ENCODE measurements at regions of chr20 and their contacts with region 1.

Region 1: DNA sequence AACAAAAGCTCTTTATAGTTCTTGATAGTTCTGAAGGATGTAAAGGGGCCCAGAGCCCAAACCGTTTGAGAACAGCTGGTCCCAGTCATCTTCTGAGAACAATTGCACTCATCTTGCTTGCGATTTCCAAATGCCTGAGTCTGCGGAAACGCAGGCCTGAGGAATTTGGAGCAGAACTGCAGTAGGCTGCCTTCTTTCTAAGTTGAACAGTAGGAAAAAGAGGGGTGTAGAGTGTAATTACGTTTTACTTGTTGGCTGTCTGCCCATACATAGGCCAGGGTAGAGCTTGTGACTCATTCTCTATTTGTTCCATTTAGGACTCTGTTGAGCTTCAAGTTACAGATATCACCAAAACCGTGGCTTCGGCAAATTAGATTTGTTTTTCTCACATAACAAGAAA is 42.0 kb upstream of the KIF16B start:
- DNase-seq: no peak

Region 2: GRCh38 chr20:15265581-15266309 is 1349.5 kb before region 1 on chr20:
- intact Hi-C with region 1: loop called in 1 of 2 experiments (anchors 5 kb)
- DNase-seq: no peak

Region 3: GRCh38 chr20:16257021-16257420 is 358.2 kb before region 1 on chr20:
- intact Hi-C with region 1: no loop called
- DNase-seq: no peak

Region 4: GRCh38 chr20:16541878-16542277 is 73.3 kb before region 1 on chr20:
- intact Hi-C with region 1: loop called in 1 of 2 experiments (anchors 2 kb)
- DNase-seq: no peak

Region 5: DNA sequence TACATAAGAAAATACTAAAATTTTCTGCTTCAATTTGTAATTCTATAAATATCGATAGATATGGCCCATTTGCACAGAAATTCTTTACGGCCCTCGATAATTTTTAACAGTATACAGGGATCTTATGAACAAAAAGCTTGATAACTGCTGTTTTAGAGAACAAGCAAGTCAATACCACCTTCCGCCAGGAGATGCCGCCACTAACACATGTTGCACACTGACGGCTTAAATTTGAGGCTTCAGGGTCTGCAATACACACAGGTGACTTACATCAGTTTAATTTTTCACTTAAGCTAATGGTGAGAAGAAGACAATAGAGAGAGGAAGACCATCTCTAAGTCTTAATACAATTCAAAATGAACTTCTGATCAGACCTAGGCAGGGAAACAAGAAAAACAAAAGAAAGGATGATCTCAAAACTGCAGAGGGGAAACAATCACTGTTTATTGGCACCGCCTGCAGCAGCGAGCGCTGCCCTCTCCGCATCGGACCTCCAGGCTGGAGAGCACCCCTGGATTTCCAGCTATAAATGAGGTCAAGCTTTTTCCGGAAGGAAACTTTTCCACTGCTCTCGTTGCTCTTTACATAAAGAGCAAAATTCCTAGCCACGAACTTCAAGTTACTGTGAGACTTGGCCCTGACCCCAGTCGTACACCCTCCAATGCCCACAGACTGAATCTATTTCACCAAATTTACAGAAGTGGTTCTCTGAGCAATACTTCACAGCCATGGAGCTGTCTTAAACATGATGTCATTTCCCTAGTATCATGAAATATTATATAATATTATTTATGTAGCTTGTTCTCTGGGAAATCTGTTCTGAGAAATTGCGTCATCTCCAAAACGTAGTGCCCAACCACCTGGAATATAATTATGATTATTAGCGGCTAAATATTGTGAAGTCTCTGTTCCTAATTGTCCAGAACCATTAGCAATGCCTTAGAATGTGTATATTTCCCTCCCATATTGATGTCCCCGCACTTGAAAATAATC is 187.0 kb after region 1 on chr20:
- intact Hi-C with region 1: no loop called
- DNase-seq: no peak